Caco-2 (cell line): ENCODE measurements at regions of chr17 and their contacts with region 1.

Region 1: DNA sequence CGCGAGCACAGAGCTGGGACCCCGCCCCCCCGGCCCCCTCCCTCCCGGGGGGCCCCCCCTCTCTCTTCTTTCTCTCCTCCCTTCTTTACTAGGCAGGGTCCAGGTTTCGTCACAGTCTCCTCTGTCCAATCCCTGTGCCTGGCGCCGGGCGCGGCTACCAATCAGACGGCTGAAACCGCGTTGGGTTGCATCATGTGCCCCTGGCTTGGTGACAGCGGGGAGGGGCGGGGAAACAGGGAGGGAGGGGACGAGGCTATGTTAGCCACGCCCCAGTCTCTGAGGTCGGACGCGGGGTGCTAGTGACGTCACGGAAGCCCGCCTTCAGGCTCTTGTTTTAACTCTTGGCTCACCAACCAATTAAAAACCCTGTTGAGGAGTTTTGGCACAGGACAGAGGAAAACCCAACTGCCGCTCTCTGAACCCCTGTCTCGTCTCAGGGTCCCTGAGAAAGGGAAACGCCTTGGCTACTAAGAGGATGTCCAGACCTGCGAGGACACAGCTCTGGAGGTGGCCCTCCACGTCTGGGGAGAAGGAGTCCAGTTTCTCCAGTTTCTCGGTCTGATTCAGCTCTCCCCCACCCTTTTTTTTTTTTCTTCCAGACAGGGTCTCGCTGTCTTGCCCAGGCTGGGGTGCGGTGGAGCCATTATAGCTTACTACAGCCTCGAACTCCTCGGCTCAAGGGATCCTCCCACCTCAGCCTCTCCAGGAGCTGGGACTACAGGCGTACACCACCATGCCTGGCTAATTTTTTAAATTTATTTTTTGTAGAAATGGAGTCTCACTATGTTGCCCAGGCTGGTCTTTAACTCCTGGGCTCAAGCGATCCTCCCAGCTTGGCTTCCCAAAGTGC is 439 bp upstream of the PLEKHH3 start:
- DNase-seq: peak; percentile 99 to 100
- H3K4me3 ChIP-seq: peak overlapping the region; percentile 85
- H3K4me3 Mint-ChIP-seq: peak overlapping the region; percentile 89
- H3K27ac Mint-ChIP-seq: peak overlapping the region; percentile 95
- H3K4me1 ChIP-seq: peaks cover 26% of the 10 kb centered on the region
- H3K4me1 Mint-ChIP-seq: peaks cover 8% of the 10 kb centered on the region
- H3K27me3 ChIP-seq: no peaks in the 10 kb centered on the region
- H3K27me3 Mint-ChIP-seq: no peaks in the 10 kb centered on the region
- CTCF ChIP-seq: no peak

Region 2: DNA sequence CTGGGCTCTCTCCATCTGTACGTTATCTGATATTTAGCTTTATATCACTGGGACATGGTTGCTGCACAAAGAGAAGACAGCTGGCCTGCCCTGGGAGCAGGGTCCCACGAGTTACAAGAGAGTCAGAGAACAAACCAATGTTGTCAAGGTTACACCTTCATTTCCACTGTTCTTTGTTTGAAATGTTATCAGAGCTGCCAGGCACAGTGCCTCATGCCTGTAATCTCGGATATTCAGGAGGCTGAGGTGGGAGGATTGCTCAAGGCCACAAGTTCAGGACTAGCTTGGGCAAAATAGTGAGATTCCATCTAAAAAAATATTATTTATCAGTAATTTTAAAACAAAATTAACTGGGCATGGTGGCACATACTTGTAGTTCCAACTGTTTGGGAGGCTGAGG is 183.9 kb before region 1 on chr17:
- CTCF ChIA-PET with region 1: no interaction called
- POLR2A ChIA-PET with region 1: no interaction called
- intact Hi-C with region 1: no loop called
- DNase-seq: no peak
- H3K4me3 ChIP-seq: no peak overlapping the region
- H3K4me3 Mint-ChIP-seq: no peak overlapping the region
- H3K27ac Mint-ChIP-seq: no peak overlapping the region
- H3K4me1 ChIP-seq: no peaks in the 10 kb centered on the region
- H3K4me1 Mint-ChIP-seq: no peaks in the 10 kb centered on the region
- H3K27me3 ChIP-seq: no peaks in the 10 kb centered on the region
- H3K27me3 Mint-ChIP-seq: no peaks in the 10 kb centered on the region
- CTCF ChIP-seq: no peak

Region 3: DNA sequence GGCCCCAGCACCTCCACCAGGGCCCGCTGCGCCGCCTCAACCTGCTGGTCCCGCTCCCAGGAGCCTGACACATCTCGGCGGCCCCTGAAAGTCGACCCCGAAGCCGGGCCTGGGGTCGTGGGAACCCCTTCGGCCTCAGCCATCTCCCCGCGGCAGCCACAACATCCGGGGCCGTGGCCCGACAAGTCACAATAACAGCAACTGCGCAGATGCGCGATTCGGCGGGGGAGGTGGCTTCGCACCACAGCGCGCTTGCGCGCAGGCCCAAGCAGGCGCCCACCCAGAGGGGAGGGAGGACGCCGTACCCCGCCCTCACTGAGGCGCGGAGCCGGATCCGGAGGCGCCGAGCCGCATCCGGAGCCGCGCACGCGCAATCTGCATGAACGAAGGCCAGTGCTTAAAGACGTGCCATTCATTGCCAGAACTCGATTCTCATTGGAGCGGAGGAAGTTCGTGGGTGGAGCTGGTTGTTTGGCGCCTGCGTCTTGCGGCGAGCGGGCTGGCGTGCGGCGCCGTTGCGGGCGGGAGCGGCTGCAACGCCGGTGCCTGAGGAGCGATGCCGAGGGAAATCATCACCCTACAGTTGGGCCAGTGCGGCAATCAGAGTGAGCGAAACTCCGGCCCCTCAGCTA is 67.9 kb before region 1 on chr17 and contains the starts of genes RETREG3 and TUBG1:
- CTCF ChIA-PET with region 1: interaction called, 27 read pairs
- POLR2A ChIA-PET with region 1: interaction called, 10 read pairs
- intact Hi-C with region 1: loop called (anchors 1 kb)
- DNase-seq: peak; percentile 99
- H3K4me3 ChIP-seq: peak within 1 kb of the TSS; percentile 72
- H3K4me3 Mint-ChIP-seq: peak within 1 kb of the TSS; percentile 90
- H3K27ac Mint-ChIP-seq: peak within 1 kb of the TSS; percentile 77
- H3K4me1 ChIP-seq: peaks cover 6% of the 10 kb centered on the region; the same call in 1 of the 2 replicates
- H3K4me1 Mint-ChIP-seq: peaks cover 13% of the 10 kb centered on the region
- H3K27me3 ChIP-seq: no peaks in the 10 kb centered on the region
- H3K27me3 Mint-ChIP-seq: no peaks in the 10 kb centered on the region
- CTCF ChIP-seq: peak; percentile 21 to 51
- total RNA-seq, gene RETREG3: 58.6 and 59.0 TPM in 2 replicates
- total RNA-seq, gene TUBG1: 108 and 112 TPM in 2 replicates

Region 4: GRCh38 chr17:42618442-42619150 is 58.6 kb before region 1 on chr17:
- CTCF ChIA-PET with region 1: interaction called, 27 read pairs
- POLR2A ChIA-PET with region 1: interaction called, 4 read pairs
- intact Hi-C with region 1: loop called (anchors 1 kb)
- DNase-seq: peak; percentile 79
- H3K4me3 ChIP-seq: no peak overlapping the region
- H3K4me3 Mint-ChIP-seq: no peak overlapping the region
- H3K27ac Mint-ChIP-seq: peak overlapping the region; percentile 30
- H3K4me1 ChIP-seq: 0 out of 2 replicates have a peak, but pooled peaks cover 8% of the 10 kb centered on the region
- H3K4me1 Mint-ChIP-seq: peaks cover 10% of the 10 kb centered on the region
- H3K27me3 ChIP-seq: no peaks in the 10 kb centered on the region
- H3K27me3 Mint-ChIP-seq: no peaks in the 10 kb centered on the region
- CTCF ChIP-seq: peak; percentile 38 to 90

Region 5: DNA sequence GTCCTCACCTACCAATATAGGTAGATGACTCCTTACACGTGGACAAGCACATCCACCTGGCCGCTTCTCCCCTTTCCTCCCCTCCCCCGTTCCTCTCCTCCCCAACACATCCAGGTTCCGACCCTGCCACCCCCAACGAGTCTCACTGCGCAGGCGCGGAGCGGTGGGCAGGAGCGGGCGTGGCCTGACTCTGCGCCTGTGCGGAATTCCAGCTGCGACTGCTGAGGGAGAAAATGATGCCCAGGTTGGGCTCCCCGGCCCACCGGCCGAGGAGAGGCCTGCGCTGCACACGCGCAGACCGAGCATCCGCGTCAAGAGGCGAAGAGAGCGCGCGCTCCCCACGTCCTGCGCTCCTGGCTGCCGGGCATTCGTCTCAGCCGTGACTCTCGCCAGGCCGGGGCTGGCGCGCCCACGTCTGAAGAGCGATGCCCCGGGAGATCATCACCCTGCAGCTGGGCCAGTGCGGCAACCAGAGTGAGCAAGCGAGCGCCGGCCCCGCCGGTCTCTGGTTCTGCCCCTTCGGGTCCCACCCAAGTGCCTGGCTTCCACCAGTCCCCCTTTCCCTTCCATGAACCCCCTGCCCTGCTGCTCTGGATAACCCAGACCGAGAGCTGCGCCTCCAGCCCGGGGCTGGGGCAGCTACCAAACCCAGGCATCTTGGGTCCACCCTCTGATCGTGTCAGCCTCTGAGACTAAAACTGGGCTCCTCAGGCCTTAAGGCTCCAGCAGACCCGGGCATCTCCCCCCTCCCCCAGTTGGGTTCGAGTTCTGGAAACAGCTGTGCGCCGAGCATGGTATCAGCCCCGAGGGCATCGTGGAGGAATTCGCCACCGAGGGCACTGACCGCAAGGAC is 17.9 kb before region 1 on chr17 and contains the start of gene TUBG2:
- CTCF ChIA-PET with region 1: interaction called, 11 read pairs
- POLR2A ChIA-PET with region 1: interaction called, 8 read pairs
- intact Hi-C with region 1: no loop called
- DNase-seq: peak; percentile 96
- H3K4me3 ChIP-seq: peak within 1 kb of the TSS; percentile 79
- H3K4me3 Mint-ChIP-seq: peak within 1 kb of the TSS; percentile 96
- H3K27ac Mint-ChIP-seq: peak within 1 kb of the TSS; percentile 82
- H3K4me1 ChIP-seq: peaks cover 10% of the 10 kb centered on the region
- H3K4me1 Mint-ChIP-seq: peaks cover 19% of the 10 kb centered on the region
- H3K27me3 ChIP-seq: no peaks in the 10 kb centered on the region
- H3K27me3 Mint-ChIP-seq: no peaks in the 10 kb centered on the region
- CTCF ChIP-seq: no peak
- total RNA-seq, gene TUBG2: 23.8 and 26.5 TPM in 2 replicates

Region 6: GRCh38 chr17:42692489-42692888 is 15.3 kb after region 1 on chr17:
- CTCF ChIA-PET with region 1: no interaction called
- POLR2A ChIA-PET with region 1: no interaction called
- intact Hi-C with region 1: no loop called
- DNase-seq: no peak
- H3K4me3 ChIP-seq: no peak overlapping the region
- H3K4me3 Mint-ChIP-seq: no peak overlapping the region
- H3K27ac Mint-ChIP-seq: no peak overlapping the region
- H3K4me1 ChIP-seq: no peaks in the 10 kb centered on the region
- H3K4me1 Mint-ChIP-seq: no peaks in the 10 kb centered on the region
- H3K27me3 ChIP-seq: no peaks in the 10 kb centered on the region
- H3K27me3 Mint-ChIP-seq: no peaks in the 10 kb centered on the region
- CTCF ChIP-seq: no peak

Region 7: DNA sequence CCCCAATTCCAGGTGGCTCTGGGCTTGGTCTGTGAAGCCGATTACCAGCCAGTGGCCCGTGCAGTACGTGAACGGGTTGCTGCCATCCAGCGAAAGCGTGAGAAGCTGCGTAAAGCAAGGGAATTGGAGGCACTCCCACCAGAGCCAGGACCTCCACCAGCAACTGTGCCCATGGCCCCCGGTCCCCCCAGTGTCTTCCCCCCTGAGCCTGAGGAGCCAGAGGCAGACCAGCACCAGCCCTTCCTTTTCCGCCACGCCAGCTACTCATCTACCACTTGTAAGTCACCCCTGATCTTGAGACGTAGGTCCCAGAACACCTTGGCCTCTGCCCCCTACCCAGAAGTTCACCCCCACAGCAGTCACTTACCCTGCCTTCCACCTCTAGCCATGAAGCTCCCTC is 110.0 kb after region 1 on chr17:
- CTCF ChIA-PET with region 1: no interaction called
- POLR2A ChIA-PET with region 1: no interaction called
- intact Hi-C with region 1: no loop called
- DNase-seq: no peak
- H3K4me3 ChIP-seq: no peak overlapping the region
- H3K4me3 Mint-ChIP-seq: no peak overlapping the region
- H3K27ac Mint-ChIP-seq: no peak overlapping the region
- H3K4me1 ChIP-seq: peaks cover 13% of the 10 kb centered on the region
- H3K4me1 Mint-ChIP-seq: peaks cover 10% of the 10 kb centered on the region
- H3K27me3 ChIP-seq: no peaks in the 10 kb centered on the region
- H3K27me3 Mint-ChIP-seq: no peaks in the 10 kb centered on the region
- CTCF ChIP-seq: no peak

Region 8: GRCh38 chr17:42872251-42872965 is 195.2 kb after region 1 on chr17:
- CTCF ChIA-PET with region 1: no interaction called
- POLR2A ChIA-PET with region 1: no interaction called
- intact Hi-C with region 1: no loop called
- DNase-seq: no peak
- H3K4me3 ChIP-seq: no peak overlapping the region
- H3K4me3 Mint-ChIP-seq: no peak overlapping the region
- H3K27ac Mint-ChIP-seq: no peak overlapping the region
- H3K4me1 ChIP-seq: no peaks in the 10 kb centered on the region
- H3K4me1 Mint-ChIP-seq: no peaks in the 10 kb centered on the region
- H3K27me3 ChIP-seq: no peaks in the 10 kb centered on the region
- H3K27me3 Mint-ChIP-seq: no peaks in the 10 kb centered on the region
- CTCF ChIP-seq: no peak